Naive thymus-derived CD4-positive, alpha-beta T cell (primary cell): ENCODE measurements at regions of chr5 and their contacts with region 1.

Region 1: DNA sequence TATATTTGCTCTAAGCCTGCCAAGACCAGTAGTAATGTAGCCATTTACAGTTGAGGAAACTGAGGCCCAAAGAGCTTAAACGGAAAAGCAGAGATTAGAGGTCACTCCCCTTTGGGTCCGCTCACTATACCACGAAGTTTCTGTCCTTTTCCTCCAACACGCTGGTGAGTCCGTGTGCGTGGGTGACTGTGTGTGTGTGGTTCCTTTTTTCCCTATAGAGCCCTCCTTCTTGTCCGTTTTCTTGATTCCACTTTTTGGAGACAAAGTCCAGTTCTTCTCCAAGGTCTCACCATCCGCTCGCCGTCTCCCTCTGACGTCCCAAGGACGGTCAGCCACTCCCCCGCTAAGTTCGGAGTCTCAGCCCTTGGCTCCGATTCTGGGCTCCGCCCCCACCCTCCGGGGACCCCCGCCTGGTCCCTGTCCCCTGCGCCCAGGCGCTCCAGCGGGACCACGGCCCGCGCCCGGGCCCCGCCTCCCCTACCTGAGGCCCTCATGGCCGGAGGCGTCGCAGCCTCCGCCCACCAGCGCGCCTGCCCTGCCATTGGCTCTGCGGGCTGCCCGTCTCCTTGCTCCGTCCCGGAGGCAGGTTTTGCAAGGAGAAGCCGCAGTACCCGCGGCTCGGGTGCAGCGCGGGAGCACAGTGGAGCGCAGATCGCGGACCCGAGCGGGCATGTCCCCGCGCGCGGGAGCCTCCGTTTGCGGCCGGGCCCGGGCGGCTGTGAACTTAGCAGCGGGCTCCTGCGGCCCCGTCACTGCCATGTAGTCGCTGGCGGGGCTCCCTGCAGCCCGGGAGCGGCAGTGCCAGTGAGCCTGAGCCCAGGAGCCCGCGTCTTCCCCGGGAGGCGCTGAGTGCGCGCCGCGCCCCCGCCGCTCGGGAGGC is at the start of gene MAST4:
- DNase-seq: peak in 7 of 9 donors; percentile 1 to 81 (median 23)
- ATAC-seq: peak; percentile 86
- H3K4me3 ChIP-seq: peak within 1 kb of the TSS; percentile 19
- H3K4me3 Mint-ChIP-seq: peak within 1 kb of the TSS; percentile 75 to 91 (median 81)
- H3K27ac ChIP-seq: no peak within 1 kb of the TSS
- H3K27ac Mint-ChIP-seq: peak within 1 kb of the TSS in 1 of 9 donors; percentile 22
- H3K4me1 ChIP-seq: peaks cover 0 to 14% of the 10 kb centered on the region in 2 donors
- H3K4me1 Mint-ChIP-seq: peaks cover 0 to 30% (median 19%) of the 10 kb centered on the region in 7 donors
- H3K27me3 ChIP-seq: peaks cover 3 to 5% of the 10 kb centered on the region in 2 donors
- H3K27me3 Mint-ChIP-seq: peaks cover 42 to 77% (median 62%) of the 10 kb centered on the region in 5 donors
- total RNA-seq, gene MAST4: 25.1 to 39.0 (median 30.9) TPM

Region 2: GRCh38 chr5:66039296-66039695 is 556.7 kb before region 1 on chr5:
- CTCF ChIA-PET with region 1: no interaction called
- POLR2A ChIA-PET with region 1: no interaction called
- intact Hi-C with region 1: no loop called
- DNase-seq: no peak
- ATAC-seq: no peak
- H3K4me3 ChIP-seq: no peak overlapping the region
- H3K4me3 Mint-ChIP-seq: no peak overlapping the region
- H3K27ac ChIP-seq: no peak overlapping the region
- H3K27ac Mint-ChIP-seq: no peak overlapping the region
- H3K4me1 ChIP-seq: no peaks in the 10 kb centered on the region
- H3K4me1 Mint-ChIP-seq: peaks cover 0 to 50% (median 35%) of the 10 kb centered on the region in 7 donors
- H3K27me3 ChIP-seq: no peaks in the 10 kb centered on the region
- H3K27me3 Mint-ChIP-seq: no peaks in the 10 kb centered on the region

Region 3: GRCh38 chr5:66519626-66520025 is 76.4 kb before region 1 on chr5:
- CTCF ChIA-PET with region 1: no interaction called
- POLR2A ChIA-PET with region 1: no interaction called
- intact Hi-C with region 1: loop called in 1 of 2 experiments (anchors 5 kb)
- DNase-seq: no peak
- ATAC-seq: no peak
- H3K4me3 ChIP-seq: no peak overlapping the region
- H3K4me3 Mint-ChIP-seq: no peak overlapping the region
- H3K27ac ChIP-seq: no peak overlapping the region
- H3K27ac Mint-ChIP-seq: no peak overlapping the region
- H3K4me1 ChIP-seq: no peaks in the 10 kb centered on the region
- H3K4me1 Mint-ChIP-seq: no peaks in the 10 kb centered on the region
- H3K27me3 ChIP-seq: no peaks in the 10 kb centered on the region
- H3K27me3 Mint-ChIP-seq: peaks cover 0 to 17% (median 5%) of the 10 kb centered on the region in 5 donors

Region 4: GRCh38 chr5:66553916-66554575 is 42.0 kb before region 1 on chr5:
- CTCF ChIA-PET with region 1: no interaction called
- POLR2A ChIA-PET with region 1: no interaction called
- intact Hi-C with region 1: loop called in 1 of 2 experiments (anchors 2 kb)
- DNase-seq: peak in 1 of 9 donors; percentile 31
- ATAC-seq: peak; percentile 83
- H3K4me3 ChIP-seq: no peak overlapping the region
- H3K4me3 Mint-ChIP-seq: peak overlapping the region in 2 of 10 donors; percentile 22 to 56
- H3K27ac ChIP-seq: no peak overlapping the region
- H3K27ac Mint-ChIP-seq: peak overlapping the region in 1 of 9 donors; percentile 71
- H3K4me1 ChIP-seq: peaks cover 0 to 5% of the 10 kb centered on the region in 2 donors
- H3K4me1 Mint-ChIP-seq: peaks cover 0 to 27% (median 0%) of the 10 kb centered on the region in 7 donors
- H3K27me3 ChIP-seq: peaks cover 0 to 3% of the 10 kb centered on the region in 2 donors
- H3K27me3 Mint-ChIP-seq: peaks cover 0 to 14% (median 4%) of the 10 kb centered on the region in 5 donors

Region 5: DNA sequence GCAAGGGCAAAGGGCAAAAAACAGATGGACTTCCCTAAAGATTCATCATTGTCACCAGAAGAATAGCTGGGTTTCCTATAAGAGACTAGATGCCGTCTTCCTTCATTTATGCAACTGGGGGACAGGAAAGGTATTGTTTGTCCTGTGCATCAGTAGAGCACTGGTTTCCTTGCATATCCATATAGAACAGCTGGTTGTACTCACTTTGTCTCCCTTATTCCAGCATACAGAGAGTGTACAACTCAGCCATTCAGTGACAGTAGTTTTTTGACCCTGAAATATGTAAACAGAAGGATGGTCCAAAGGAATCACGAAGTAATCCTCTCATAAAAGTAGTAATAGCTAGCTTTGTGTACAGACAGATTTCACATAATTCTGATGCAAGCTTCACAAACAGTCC is 22.3 kb before region 1 on chr5:
- CTCF ChIA-PET with region 1: no interaction called
- POLR2A ChIA-PET with region 1: no interaction called
- intact Hi-C with region 1: no loop called
- DNase-seq: no peak
- ATAC-seq: no peak
- H3K4me3 ChIP-seq: no peak overlapping the region
- H3K4me3 Mint-ChIP-seq: no peak overlapping the region
- H3K27ac ChIP-seq: no peak overlapping the region
- H3K27ac Mint-ChIP-seq: no peak overlapping the region
- H3K4me1 ChIP-seq: no peaks in the 10 kb centered on the region
- H3K4me1 Mint-ChIP-seq: peaks cover 0 to 3% (median 0%) of the 10 kb centered on the region in 7 donors
- H3K27me3 ChIP-seq: no peaks in the 10 kb centered on the region
- H3K27me3 Mint-ChIP-seq: peaks cover 30 to 45% (median 40%) of the 10 kb centered on the region in 5 donors